CD8-positive, alpha-beta T cell (primary cell): ENCODE measurements at regions of chr3 and their contacts with region 1.

Region 1: GRCh38 chr3:50350527-50351322 is at the starts of genes CYB561D2 and NPRL2:
- DNase-seq: peak; percentile 98 to 100 (median 99)
- ATAC-seq: peak; percentile 88
- H3K4me3 ChIP-seq: peak within 1 kb of the TSS; percentile 79
- H3K4me3 Mint-ChIP-seq: peak within 1 kb of the TSS; percentile 98
- H3K27ac ChIP-seq: peak within 1 kb of the TSS; percentile 83 to 94
- H3K27ac Mint-ChIP-seq: peak within 1 kb of the TSS; percentile 99
- H3K4me1 ChIP-seq: peaks cover 54% of the 10 kb centered on the region
- H3K4me1 Mint-ChIP-seq: peaks cover 65% of the 10 kb centered on the region
- H3K27me3 ChIP-seq: no peaks in the 10 kb centered on the region
- H3K27me3 Mint-ChIP-seq: no peaks in the 10 kb centered on the region
- CTCF ChIP-seq: no peak
- total RNA-seq, gene CYB561D2: 24.2 to 24.3 TPM
- total RNA-seq, gene NPRL2: 28.7 to 30.9 TPM

Region 2: GRCh38 chr3:50292159-50293078 is 58.3 kb before region 1 on chr3 and contains the start of gene IFRD2:
- CTCF ChIA-PET with region 1: interaction called, 6 read pairs
- POLR2A ChIA-PET with region 1: interaction called, 18 read pairs
- intact Hi-C with region 1: loop called in 1 of 2 experiments (anchors 1 kb)
- DNase-seq: peak in 8 of 9 experiments; percentile 92 to 98 (median 94)
- ATAC-seq: peak; percentile 98
- H3K4me3 ChIP-seq: peak within 1 kb of the TSS; percentile 87 to 88
- H3K4me3 Mint-ChIP-seq: peak within 1 kb of the TSS; percentile 89
- H3K27ac ChIP-seq: peak within 1 kb of the TSS; percentile 68 to 81
- H3K27ac Mint-ChIP-seq: peak within 1 kb of the TSS; percentile 96
- H3K4me1 ChIP-seq: peaks cover 13% of the 10 kb centered on the region
- H3K4me1 Mint-ChIP-seq: peaks cover 18% of the 10 kb centered on the region
- H3K27me3 ChIP-seq: no peaks in the 10 kb centered on the region
- H3K27me3 Mint-ChIP-seq: no peaks in the 10 kb centered on the region
- CTCF ChIP-seq: no peak
- total RNA-seq, gene IFRD2: 42.4 to 42.9 TPM

Region 3: DNA sequence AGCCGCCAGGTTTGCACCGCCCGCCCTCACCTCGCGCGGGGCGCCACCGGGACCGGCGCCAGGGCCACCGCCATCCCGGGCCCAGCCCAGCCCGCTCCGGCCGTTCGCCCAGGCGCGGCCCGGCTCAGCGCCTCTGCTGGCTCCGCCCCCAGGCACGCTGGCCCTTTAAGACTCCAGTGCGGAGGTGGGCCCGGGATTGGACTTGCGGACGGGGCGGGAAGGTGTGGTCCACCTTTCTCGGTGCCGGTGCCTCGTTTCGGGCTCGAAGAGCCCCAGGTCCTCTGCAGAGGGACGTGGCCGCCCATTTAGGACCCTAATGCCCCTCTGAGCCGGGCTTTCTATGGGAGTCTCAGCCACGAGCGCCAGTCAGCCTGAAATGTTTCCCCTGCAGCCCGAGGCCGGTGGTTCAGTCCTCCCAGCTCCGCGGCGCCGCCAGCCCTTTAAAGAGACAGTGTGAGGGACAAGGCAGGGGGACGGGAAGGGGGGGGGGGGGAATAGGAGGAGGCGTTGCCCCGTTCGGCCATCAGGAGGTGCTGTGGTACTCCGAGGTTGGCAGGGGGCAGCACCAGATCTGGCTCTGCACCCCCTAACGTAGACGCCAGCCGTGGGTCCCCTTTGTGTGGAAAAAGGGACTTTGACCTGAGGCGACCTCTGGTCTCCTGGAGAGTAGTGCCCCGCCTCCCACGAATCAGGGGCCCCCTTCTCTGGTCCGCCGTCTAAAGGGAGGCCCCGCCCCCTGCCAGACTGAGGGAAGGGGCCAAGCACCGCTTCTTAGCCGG is 29.2 kb before region 1 on chr3:
- CTCF ChIA-PET with region 1: interaction called, 31 read pairs
- POLR2A ChIA-PET with region 1: interaction called, 5 read pairs
- intact Hi-C with region 1: loop called (anchors 1 kb)
- DNase-seq: peak; percentile 65 to 89 (median 82)
- ATAC-seq: peak; percentile 69
- H3K4me3 ChIP-seq: peak overlapping the region; percentile 71 to 96
- H3K4me3 Mint-ChIP-seq: peak overlapping the region; percentile 85
- H3K27ac ChIP-seq: peak overlapping the region; percentile 77 to 94
- H3K27ac Mint-ChIP-seq: peak overlapping the region; percentile 92
- H3K4me1 ChIP-seq: peaks cover 30% of the 10 kb centered on the region
- H3K4me1 Mint-ChIP-seq: peaks cover 41% of the 10 kb centered on the region
- H3K27me3 ChIP-seq: no peaks in the 10 kb centered on the region
- H3K27me3 Mint-ChIP-seq: no peaks in the 10 kb centered on the region
- CTCF ChIP-seq: peak; percentile 47

Region 4: DNA sequence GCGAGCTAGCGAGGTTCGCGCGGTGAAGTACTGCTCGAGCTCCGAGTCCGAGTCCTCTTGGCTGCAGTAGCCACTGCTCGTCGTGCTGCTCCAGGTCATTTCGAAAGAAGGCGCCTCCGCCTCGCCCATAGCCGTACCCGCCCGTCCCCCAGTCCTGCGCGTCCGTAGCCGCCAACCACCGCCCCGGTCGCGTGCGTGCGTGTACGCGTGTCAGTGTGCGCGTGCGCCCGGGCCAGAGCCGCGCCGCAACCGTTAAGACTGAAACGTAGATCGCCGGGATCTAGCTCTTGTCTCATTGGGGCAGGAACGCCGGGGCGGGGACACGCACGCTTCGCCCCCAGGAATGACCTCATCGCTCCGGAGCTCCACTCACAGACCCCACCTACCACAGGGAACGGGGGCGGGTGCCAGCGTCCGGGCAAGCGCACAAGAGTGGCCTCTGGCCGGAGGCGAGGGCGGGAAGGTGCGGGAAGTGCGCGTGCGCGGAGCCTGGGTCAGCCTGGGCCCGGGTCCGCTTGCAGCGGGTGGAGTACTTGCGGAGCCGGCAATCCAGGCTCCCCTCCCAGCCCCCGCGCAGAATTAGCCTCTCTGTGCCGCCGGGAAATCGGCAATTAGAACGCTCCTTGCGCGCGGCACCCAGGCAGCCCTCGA is 13.4 kb before region 1 on chr3:
- CTCF ChIA-PET with region 1: interaction called, 35 read pairs
- POLR2A ChIA-PET with region 1: interaction called, 129 read pairs
- intact Hi-C with region 1: loop called (anchors 1 kb)
- DNase-seq: peak; percentile 74 to 98 (median 93)
- ATAC-seq: peak; percentile 81
- H3K4me3 ChIP-seq: peak overlapping the region; percentile 88 to 98
- H3K4me3 Mint-ChIP-seq: peak overlapping the region; percentile 98
- H3K27ac ChIP-seq: peak overlapping the region; percentile 91 to 93
- H3K27ac Mint-ChIP-seq: peak overlapping the region; percentile 96
- H3K4me1 ChIP-seq: peaks cover 77% of the 10 kb centered on the region
- H3K4me1 Mint-ChIP-seq: peaks cover 74% of the 10 kb centered on the region
- H3K27me3 ChIP-seq: no peaks in the 10 kb centered on the region
- H3K27me3 Mint-ChIP-seq: no peaks in the 10 kb centered on the region
- CTCF ChIP-seq: no peak

Region 5: GRCh38 chr3:50436114-50436674 is 85.5 kb after region 1 on chr3:
- CTCF ChIA-PET with region 1: interaction called, 5 read pairs
- POLR2A ChIA-PET with region 1: no interaction called
- intact Hi-C with region 1: loop called in 1 of 2 experiments (anchors 2 kb)
- DNase-seq: peak; percentile 62 to 89 (median 80)
- ATAC-seq: peak; percentile 98
- H3K4me3 ChIP-seq: no peak overlapping the region
- H3K4me3 Mint-ChIP-seq: no peak overlapping the region
- H3K27ac ChIP-seq: no peak overlapping the region
- H3K27ac Mint-ChIP-seq: no peak overlapping the region
- H3K4me1 ChIP-seq: peaks cover 7% of the 10 kb centered on the region
- H3K4me1 Mint-ChIP-seq: peaks cover 4% of the 10 kb centered on the region
- H3K27me3 ChIP-seq: no peaks in the 10 kb centered on the region
- H3K27me3 Mint-ChIP-seq: no peaks in the 10 kb centered on the region
- CTCF ChIP-seq: peak; percentile 87

Region 6: GRCh38 chr3:50450209-50450921 is 99.6 kb after region 1 on chr3:
- CTCF ChIA-PET with region 1: no interaction called
- POLR2A ChIA-PET with region 1: no interaction called
- intact Hi-C with region 1: no loop called
- DNase-seq: peak; percentile 48 to 82 (median 75)
- ATAC-seq: peak; percentile 80
- H3K4me3 ChIP-seq: peak overlapping the region; percentile 43 to 54
- H3K4me3 Mint-ChIP-seq: peak overlapping the region; percentile 86
- H3K27ac ChIP-seq: peak overlapping the region; percentile 83 to 88
- H3K27ac Mint-ChIP-seq: peak overlapping the region; percentile 93
- H3K4me1 ChIP-seq: peaks cover 28% of the 10 kb centered on the region
- H3K4me1 Mint-ChIP-seq: peaks cover 32% of the 10 kb centered on the region
- H3K27me3 ChIP-seq: no peaks in the 10 kb centered on the region
- H3K27me3 Mint-ChIP-seq: no peaks in the 10 kb centered on the region
- CTCF ChIP-seq: no peak

Region 7: GRCh38 chr3:50550079-50550741 is 199.5 kb after region 1 on chr3:
- CTCF ChIA-PET with region 1: interaction called, 67 read pairs
- POLR2A ChIA-PET with region 1: no interaction called
- intact Hi-C with region 1: no loop called
- DNase-seq: peak; percentile 43 to 75 (median 71)
- ATAC-seq: peak; percentile 89
- H3K4me3 ChIP-seq: no peak overlapping the region
- H3K4me3 Mint-ChIP-seq: no peak overlapping the region
- H3K27ac ChIP-seq: no peak overlapping the region
- H3K27ac Mint-ChIP-seq: no peak overlapping the region
- H3K4me1 ChIP-seq: no peaks in the 10 kb centered on the region
- H3K4me1 Mint-ChIP-seq: no peaks in the 10 kb centered on the region
- H3K27me3 ChIP-seq: no peaks in the 10 kb centered on the region
- H3K27me3 Mint-ChIP-seq: no peaks in the 10 kb centered on the region
- CTCF ChIP-seq: peak; percentile 82